ENCODE measurements at regions of chr2 and their contacts with region 1.

Region 1: DNA sequence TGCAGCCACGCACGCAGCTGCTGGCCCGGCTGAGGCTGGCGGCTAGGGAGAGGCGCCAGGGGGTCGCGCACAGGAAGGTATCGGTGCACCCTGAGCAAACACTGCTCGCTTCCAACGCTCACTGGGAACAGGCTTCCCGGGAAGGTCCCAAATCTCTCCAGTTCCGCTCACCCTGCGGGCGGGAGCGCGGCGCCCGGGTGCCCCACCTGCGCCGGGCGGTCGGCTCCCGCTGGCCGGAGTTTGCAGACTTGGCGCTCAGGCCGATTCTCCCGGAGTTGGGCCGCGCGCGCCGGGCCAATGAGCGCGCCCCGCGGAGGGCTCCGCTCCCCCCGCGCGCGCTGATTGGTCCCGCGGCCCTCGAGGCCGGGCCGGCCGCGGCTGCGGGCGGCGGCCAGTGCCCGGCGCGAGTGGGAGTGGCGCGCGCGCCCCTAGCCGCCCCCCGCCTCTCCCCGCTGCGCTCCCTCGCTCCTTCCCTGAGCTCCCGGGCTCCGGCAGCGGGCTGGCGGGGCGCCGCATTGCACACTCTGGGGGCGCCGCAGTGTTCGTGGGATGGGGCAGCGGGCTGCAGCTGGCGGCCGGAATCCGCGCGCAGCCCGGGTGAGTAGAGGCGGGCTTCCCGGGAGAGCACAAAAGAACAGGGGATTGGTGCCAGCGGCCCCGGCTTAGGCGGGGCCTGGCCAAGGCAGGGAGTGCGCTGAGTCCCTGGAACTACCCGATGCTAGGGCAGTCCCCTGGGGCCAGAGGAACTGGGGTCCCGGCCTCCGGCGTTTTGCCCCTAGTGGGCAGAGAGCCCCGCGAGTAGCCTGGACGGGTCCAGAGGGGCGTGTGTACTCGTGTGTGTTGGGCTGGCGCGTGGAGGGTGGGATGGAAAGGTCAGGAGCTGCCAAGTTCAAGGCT is at the start of gene LYPD6:
- DNase-seq: peak; percentile 76
- H3K4me3 ChIP-seq: peak within 1 kb of the TSS; percentile 78 to 89 (median 87)
- H3K27ac ChIP-seq: peak within 1 kb of the TSS; percentile 41
- H3K4me1 ChIP-seq: peaks cover 12% of the 10 kb centered on the region
- H3K27me3 ChIP-seq: no peaks in the 10 kb centered on the region
- CTCF ChIP-seq: peak; percentile 6 to 15
- POLR2A ChIP-seq: no peak
- total RNA-seq, gene LYPD6: 3.1 and 4.0 TPM in 2 replicates

Region 2: GRCh38 chr2:149313512-149313972 is 16.8 kb before region 1 on chr2:
- CTCF ChIA-PET with region 1: interaction called, 11 read pairs
- POLR2A ChIA-PET with region 1: no interaction called
- dilution Hi-C with region 1: no loop called
- intact Hi-C with region 1: no loop called
- DNase-seq: peak; percentile 40
- H3K4me3 ChIP-seq: no peak overlapping the region
- H3K27ac ChIP-seq: no peak overlapping the region
- H3K4me1 ChIP-seq: no peaks in the 10 kb centered on the region
- H3K27me3 ChIP-seq: peaks cover 3 to 8% of the 10 kb centered on the region in 2 experiments
- CTCF ChIP-seq: peak; percentile 65 to 73
- POLR2A ChIP-seq: no peak

Region 3: DNA sequence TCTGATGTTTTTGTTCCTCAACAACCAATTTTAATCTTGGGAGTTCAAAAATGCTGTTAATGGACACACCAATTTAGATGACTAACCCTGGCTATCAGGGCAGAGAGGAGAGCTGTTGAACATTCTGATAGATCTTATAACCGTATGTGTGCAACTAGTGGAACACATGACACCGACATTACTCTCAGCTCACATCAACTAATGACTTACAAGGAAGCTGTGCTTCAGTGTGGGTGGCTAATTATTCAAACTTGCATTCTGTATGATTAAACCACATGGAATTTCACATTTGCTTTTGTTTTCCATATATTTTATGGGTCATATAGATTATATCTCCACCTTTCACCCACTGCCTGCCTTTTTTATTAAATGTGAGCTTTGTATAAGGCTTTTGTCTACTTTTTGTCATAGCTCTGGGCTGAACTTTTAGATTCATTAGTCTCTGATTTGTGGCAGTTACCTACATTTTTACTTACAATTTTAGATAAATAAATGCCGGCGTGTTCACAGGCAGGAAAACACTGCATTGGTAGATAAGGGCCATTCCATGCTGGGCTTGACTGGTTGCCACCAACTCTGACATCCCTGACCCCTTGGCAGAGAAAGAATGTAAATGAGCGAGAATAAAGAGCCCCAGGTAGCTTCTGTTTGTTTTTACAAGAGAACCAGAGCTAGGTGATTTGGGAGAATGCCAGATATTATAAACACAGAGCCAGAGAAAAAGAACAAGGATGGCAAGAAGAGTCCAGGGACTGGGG is 35.6 kb after region 1 on chr2:
- CTCF ChIA-PET with region 1: interaction called, 18 read pairs
- POLR2A ChIA-PET with region 1: interaction called, 5 read pairs
- dilution Hi-C with region 1: no loop called
- intact Hi-C with region 1: loop called (anchors 1 kb)
- DNase-seq: peak; percentile 98
- H3K4me3 ChIP-seq: no peak overlapping the region
- H3K27ac ChIP-seq: peak overlapping the region; percentile 49
- H3K4me1 ChIP-seq: peaks cover 20% of the 10 kb centered on the region
- H3K27me3 ChIP-seq: no peaks in the 10 kb centered on the region
- CTCF ChIP-seq: no peak
- POLR2A ChIP-seq: peak; percentile 15